Caco-2 (cell line): ENCODE measurements at regions of chr2 and their contacts with region 1.

Region 1: DNA sequence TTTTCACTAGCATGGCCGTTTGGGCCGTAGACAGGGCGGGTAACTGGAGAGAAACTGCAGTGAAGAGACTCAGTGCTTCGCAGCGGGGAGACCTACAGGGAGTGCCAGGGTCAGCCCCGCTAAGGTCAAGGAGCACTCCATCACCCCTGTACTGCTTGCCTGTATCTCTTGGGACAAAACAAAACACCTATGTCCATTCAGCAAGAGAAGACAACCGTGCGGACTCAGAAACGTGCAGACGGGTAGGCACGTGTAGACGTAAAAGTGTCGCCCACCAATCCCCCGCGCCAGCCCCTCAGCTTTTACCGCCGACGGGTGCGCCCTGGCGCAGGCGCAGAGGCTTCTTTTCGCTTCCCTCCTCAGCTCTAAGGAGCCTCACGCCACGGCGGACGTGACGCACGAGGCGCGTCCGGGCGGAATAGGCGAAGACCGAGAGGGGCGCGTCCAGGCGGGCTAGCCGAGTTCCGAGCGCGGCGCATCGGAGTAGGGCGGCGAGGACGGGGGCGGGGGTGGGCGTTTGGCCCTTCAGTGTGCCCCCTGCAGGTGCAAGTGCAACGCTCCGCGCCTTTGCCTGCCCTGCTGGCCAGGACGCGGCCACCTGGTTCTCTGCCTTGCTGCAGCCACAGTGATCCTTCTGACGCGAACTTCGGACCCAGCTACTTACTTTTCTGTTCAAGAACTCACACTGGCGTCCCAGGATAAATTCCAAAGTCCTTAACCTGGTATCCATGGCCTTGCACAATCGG is 3.3 kb upstream of the SOS1 start:
- DNase-seq: peak; percentile 99
- H3K4me3 ChIP-seq: peak overlapping the region; percentile 70
- H3K4me3 Mint-ChIP-seq: peak overlapping the region; percentile 91
- H3K27ac Mint-ChIP-seq: peak overlapping the region; percentile 92
- H3K4me1 ChIP-seq: peaks cover 22% of the 10 kb centered on the region
- H3K4me1 Mint-ChIP-seq: peaks cover 13% of the 10 kb centered on the region
- H3K27me3 ChIP-seq: no peaks in the 10 kb centered on the region
- H3K27me3 Mint-ChIP-seq: no peaks in the 10 kb centered on the region
- CTCF ChIP-seq: peak; percentile 81 to 90

Region 2: GRCh38 chr2:38947240-38948239 is 176.6 kb before region 1 on chr2:
- CTCF ChIA-PET with region 1: interaction called, 11 read pairs
- POLR2A ChIA-PET with region 1: interaction called, 6 read pairs
- intact Hi-C with region 1: loop called (anchors 10 kb)
- DNase-seq: peak; percentile 81 to 83
- H3K4me3 ChIP-seq: no peak overlapping the region
- H3K4me3 Mint-ChIP-seq: no peak overlapping the region
- H3K27ac Mint-ChIP-seq: no peak overlapping the region
- H3K4me1 ChIP-seq: peaks cover 21% of the 10 kb centered on the region
- H3K4me1 Mint-ChIP-seq: peaks cover 22% of the 10 kb centered on the region
- H3K27me3 ChIP-seq: no peaks in the 10 kb centered on the region
- H3K27me3 Mint-ChIP-seq: no peaks in the 10 kb centered on the region
- CTCF ChIP-seq: peak; percentile 80 to 85

Region 3: GRCh38 chr2:39139511-39140237 is 15.5 kb after region 1 on chr2:
- CTCF ChIA-PET with region 1: no interaction called
- POLR2A ChIA-PET with region 1: interaction called, 3 read pairs
- intact Hi-C with region 1: loop called (anchors 1 kb)
- DNase-seq: no peak
- H3K4me3 ChIP-seq: no peak overlapping the region
- H3K4me3 Mint-ChIP-seq: no peak overlapping the region
- H3K27ac Mint-ChIP-seq: no peak overlapping the region
- H3K4me1 ChIP-seq: peaks cover 23% of the 10 kb centered on the region
- H3K4me1 Mint-ChIP-seq: peaks cover 17% of the 10 kb centered on the region
- H3K27me3 ChIP-seq: no peaks in the 10 kb centered on the region
- H3K27me3 Mint-ChIP-seq: no peaks in the 10 kb centered on the region
- CTCF ChIP-seq: no peak

Region 4: GRCh38 chr2:39216346-39217191 is 92.4 kb after region 1 on chr2:
- CTCF ChIA-PET with region 1: interaction called, 4 read pairs
- POLR2A ChIA-PET with region 1: interaction called, 3 read pairs
- intact Hi-C with region 1: loop called (anchors 1 kb)
- DNase-seq: peak; percentile 67
- H3K4me3 ChIP-seq: no peak overlapping the region
- H3K4me3 Mint-ChIP-seq: peak overlapping the region; percentile 59
- H3K27ac Mint-ChIP-seq: peak overlapping the region; percentile 46
- H3K4me1 ChIP-seq: peaks cover 34% of the 10 kb centered on the region
- H3K4me1 Mint-ChIP-seq: peaks cover 24% of the 10 kb centered on the region
- H3K27me3 ChIP-seq: no peaks in the 10 kb centered on the region
- H3K27me3 Mint-ChIP-seq: no peaks in the 10 kb centered on the region
- CTCF ChIP-seq: no peak

Region 5: DNA sequence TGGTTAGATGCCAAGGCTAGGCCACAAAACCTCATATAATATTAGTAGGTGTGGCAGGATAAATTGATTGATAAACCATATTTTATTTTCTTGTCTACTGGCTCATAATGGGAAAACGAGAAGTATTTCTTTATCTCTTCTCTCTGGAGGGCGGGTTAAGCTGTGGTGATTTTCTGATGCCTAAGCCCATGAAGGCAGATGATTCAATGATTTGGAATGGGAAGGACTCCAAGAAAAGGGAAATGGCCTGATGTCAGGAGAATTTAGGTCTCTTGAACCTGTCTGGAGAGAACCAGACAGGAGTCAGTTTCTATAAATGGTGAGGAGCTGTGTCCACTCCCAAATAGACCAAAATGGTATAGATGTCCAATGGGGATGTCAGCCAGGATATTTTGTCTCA is 331.7 kb after region 1 on chr2:
- CTCF ChIA-PET with region 1: no interaction called
- POLR2A ChIA-PET with region 1: no interaction called
- intact Hi-C with region 1: no loop called
- DNase-seq: no peak
- H3K4me3 ChIP-seq: no peak overlapping the region
- H3K4me3 Mint-ChIP-seq: no peak overlapping the region
- H3K27ac Mint-ChIP-seq: no peak overlapping the region
- H3K4me1 ChIP-seq: no peaks in the 10 kb centered on the region
- H3K4me1 Mint-ChIP-seq: no peaks in the 10 kb centered on the region
- H3K27me3 ChIP-seq: no peaks in the 10 kb centered on the region
- H3K27me3 Mint-ChIP-seq: no peaks in the 10 kb centered on the region
- CTCF ChIP-seq: no peak